Activated CD4-positive, alpha-beta memory T cell treated with anti-CD3 and anti-CD28 coated beads for 36 hours (primary cell): ENCODE measurements at regions of chr1 and their contacts with region 1.

Region 1: DNA sequence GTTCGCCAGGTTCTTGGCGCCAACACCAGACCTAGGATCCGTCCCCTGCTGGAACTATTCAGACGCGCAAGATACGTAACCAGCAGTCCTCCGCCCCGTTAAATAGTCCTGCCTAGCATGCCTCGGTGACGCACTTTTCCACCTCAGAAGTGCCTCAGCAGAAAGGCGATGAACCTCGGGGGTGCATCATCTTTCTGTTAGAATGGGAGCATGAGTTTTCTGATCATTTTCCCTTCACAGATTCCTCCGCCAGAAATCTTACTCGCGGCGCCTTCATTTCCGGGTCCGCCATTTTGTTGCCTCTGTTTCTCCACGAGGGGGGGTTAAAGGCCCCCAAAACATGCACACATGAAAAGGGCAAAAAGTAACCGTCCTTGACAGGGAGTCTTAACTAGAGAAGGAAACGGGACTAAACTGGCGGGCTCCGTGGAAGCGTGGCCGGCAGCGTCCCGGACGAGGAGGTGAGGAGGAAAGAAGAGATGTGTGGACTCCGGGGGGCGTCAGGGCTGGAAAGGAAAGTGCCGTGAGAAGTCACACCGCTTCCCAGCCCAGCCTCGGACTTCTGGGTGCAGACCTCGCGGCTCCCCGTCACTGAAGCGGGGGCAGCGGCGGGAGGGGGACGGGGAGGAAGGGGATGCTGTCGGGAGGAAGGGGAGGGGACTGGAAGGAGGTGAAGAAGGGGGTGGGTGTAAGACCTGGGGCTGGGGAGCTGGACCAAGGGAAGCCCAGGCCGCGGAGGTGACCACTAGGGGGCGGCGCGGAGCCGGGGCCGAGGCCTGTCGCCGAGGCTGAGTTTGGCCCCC is at the start of gene GABPB2:
- DNase-seq: peak; percentile 93
- H3K4me3 Mint-ChIP-seq: peak within 1 kb of the TSS; percentile 94
- H3K27ac Mint-ChIP-seq: peak within 1 kb of the TSS; percentile 100
- H3K4me1 Mint-ChIP-seq: peaks cover 15% of the 10 kb centered on the region
- H3K27me3 Mint-ChIP-seq: no peaks in the 10 kb centered on the region
- total RNA-seq, gene GABPB2: 13.6 to 14.9 TPM

Region 2: GRCh38 chr1:151059078-151059907 is 11.4 kb before region 1 on chr1 and contains the start of gene CDC42SE1:
- CTCF ChIA-PET with region 1: interaction called, 56 read pairs
- POLR2A ChIA-PET with region 1: interaction called, 23 read pairs
- intact Hi-C with region 1: loop called (anchors 1 kb)
- DNase-seq: peak; percentile 89
- H3K4me3 Mint-ChIP-seq: peak within 1 kb of the TSS; percentile 98
- H3K27ac Mint-ChIP-seq: peak within 1 kb of the TSS; percentile 99
- H3K4me1 Mint-ChIP-seq: peaks cover 56% of the 10 kb centered on the region
- H3K27me3 Mint-ChIP-seq: no peaks in the 10 kb centered on the region
- total RNA-seq, gene CDC42SE1: 135 to 136 TPM

Region 3: DNA sequence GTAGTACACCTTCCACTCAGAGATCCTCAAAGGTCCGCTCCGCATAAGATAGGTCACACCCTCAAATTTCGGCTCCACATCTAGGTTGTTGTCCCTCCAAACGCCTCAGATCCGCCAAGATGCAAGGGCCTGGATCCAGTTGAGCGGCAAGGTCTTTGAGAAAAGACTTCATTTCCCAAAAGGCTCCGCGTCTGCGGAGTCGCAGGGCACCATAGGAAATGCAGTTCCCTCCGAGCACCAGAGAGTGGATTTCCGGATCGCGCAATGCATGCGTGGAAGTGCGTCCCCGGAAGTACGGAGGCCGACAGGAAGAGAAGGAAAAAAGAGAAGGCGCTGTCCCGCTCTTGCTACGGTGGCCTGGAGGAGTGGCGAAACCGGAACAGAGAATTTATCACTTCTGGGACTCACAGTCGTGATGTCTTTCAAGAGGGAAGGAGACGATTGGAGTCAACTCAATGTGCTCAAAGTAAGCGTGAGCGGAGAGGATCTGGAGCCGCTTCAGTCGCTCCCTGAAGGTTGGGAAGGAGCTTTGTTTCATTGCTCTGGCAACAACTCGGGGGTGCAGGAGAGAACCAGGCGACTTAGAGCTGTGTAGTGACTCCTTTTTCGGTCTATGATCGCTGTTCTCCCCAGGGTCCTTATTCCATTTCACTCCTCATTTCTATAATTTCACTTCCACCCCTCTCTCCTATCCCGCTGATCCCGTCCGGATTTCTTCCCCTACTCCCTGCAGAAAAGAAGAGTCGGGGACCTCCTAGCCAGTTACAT is 95.2 kb after region 1 on chr1 and contains the starts of genes LYSMD1 and SCNM1:
- CTCF ChIA-PET with region 1: interaction called, 3 read pairs
- POLR2A ChIA-PET with region 1: no interaction called
- intact Hi-C with region 1: loop called (anchors 2 kb)
- DNase-seq: peak; percentile 99
- H3K4me3 Mint-ChIP-seq: peak within 1 kb of the TSS; percentile 92
- H3K27ac Mint-ChIP-seq: peak within 1 kb of the TSS; percentile 92
- H3K4me1 Mint-ChIP-seq: peaks cover 49% of the 10 kb centered on the region
- H3K27me3 Mint-ChIP-seq: peaks cover 2% of the 10 kb centered on the region
- total RNA-seq, gene LYSMD1: 1.8 to 2.6 TPM
- total RNA-seq, gene SCNM1: 67.5 to 67.8 TPM

Region 4: GRCh38 chr1:151372061-151372934 is 301.6 kb after region 1 on chr1 and contains the start of gene SELENBP1:
- CTCF ChIA-PET with region 1: no interaction called
- POLR2A ChIA-PET with region 1: no interaction called
- intact Hi-C with region 1: no loop called
- DNase-seq: no peak
- H3K4me3 Mint-ChIP-seq: no peak within 1 kb of the TSS
- H3K27ac Mint-ChIP-seq: no peak within 1 kb of the TSS
- H3K4me1 Mint-ChIP-seq: no peaks in the 10 kb centered on the region
- H3K27me3 Mint-ChIP-seq: no peaks in the 10 kb centered on the region
- total RNA-seq, gene SELENBP1: not detected